ENCODE measurements at regions of chr12 and their contacts with region 1.

Region 1: GRCh38 chr12:131132118-131132892 is 178.6 kb downstream of the ADGRD1 start:
- DNase-seq: peak in 9 of 10 donors; percentile 68 to 96 (median 74)

Region 2: DNA sequence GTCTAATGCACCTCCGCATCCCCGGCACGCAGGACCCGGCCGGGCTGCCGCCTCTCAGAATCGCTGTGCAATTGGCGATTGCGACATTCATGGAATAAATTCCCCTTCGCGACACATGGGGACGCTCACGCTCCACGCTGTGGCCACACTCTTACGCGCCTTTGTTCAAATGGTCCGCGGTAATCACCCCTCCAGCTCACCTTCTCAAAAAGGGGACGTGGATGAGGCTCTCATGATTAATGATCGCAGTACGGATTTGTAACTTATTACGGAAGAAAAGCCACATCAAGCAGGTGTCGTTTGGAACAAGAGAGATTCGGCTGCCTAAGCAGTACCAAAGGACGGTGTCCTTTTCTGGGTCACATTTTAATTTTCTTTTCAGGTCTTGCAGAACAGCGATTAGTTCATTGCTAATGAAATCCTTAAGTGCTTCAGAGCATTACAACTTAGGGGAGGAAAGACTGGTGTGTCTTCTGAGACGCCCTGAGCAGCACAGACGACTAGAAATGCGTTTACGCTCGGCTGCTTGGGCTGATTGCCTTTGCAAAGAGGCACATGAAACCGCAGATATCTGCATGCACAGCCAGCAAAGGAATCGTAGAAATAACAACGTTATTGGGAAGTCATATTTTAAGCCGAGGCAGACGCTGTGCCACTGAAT is 215.9 kb before region 1 on chr12:
- intact Hi-C with region 1: loop called (anchors 2 kb)
- DNase-seq: peak; percentile 55 to 95 (median 70)